ENCODE measurements at regions of chr15 and their contacts with region 1.

Region 1: GRCh38 chr15:50003786-50004334 is 115.2 kb downstream of the ATP8B4 start:
- DNase-seq: peak; percentile 74 to 79
- ATAC-seq: peak; percentile 97 to 99 (median 99)
- H3K4me3 ChIP-seq: no peak overlapping the region
- H3K4me3 Mint-ChIP-seq: peak overlapping the region; percentile 75
- H3K27ac ChIP-seq: peak overlapping the region; percentile 66
- H3K27ac Mint-ChIP-seq: peak overlapping the region; percentile 88 to 95
- H3K4me1 ChIP-seq: peaks cover 13% of the 10 kb centered on the region
- H3K4me1 Mint-ChIP-seq: peaks cover 25 to 30% of the 10 kb centered on the region in 2 donors
- H3K27me3 ChIP-seq: no peaks in the 10 kb centered on the region
- H3K27me3 Mint-ChIP-seq: no peaks in the 10 kb centered on the region
- CTCF ChIP-seq: peak; percentile 73

Region 2: GRCh38 chr15:50046867-50047266 is 43.0 kb after region 1 on chr15:
- intact Hi-C with region 1: no loop called
- DNase-seq: no peak
- ATAC-seq: peak; percentile 76 to 82 (median 80)
- H3K4me3 ChIP-seq: no peak overlapping the region
- H3K4me3 Mint-ChIP-seq: no peak overlapping the region
- H3K27ac ChIP-seq: peak overlapping the region; percentile 83
- H3K27ac Mint-ChIP-seq: peak overlapping the region; percentile 89 to 95
- H3K4me1 ChIP-seq: peaks cover 2% of the 10 kb centered on the region
- H3K4me1 Mint-ChIP-seq: peaks cover 41 to 53% of the 10 kb centered on the region in 2 donors
- H3K27me3 ChIP-seq: no peaks in the 10 kb centered on the region
- H3K27me3 Mint-ChIP-seq: no peaks in the 10 kb centered on the region
- CTCF ChIP-seq: no peak

Region 3: GRCh38 chr15:50059883-50060282 is 56.0 kb after region 1 on chr15:
- intact Hi-C with region 1: loop called (anchors 5 kb)
- DNase-seq: no peak
- ATAC-seq: peak in 2 of 3 donors; percentile 29 to 51
- H3K4me3 ChIP-seq: no peak overlapping the region
- H3K4me3 Mint-ChIP-seq: peak overlapping the region; percentile 41
- H3K27ac ChIP-seq: no peak overlapping the region
- H3K27ac Mint-ChIP-seq: peak overlapping the region; percentile 55 to 58
- H3K4me1 ChIP-seq: peaks cover 19% of the 10 kb centered on the region
- H3K4me1 Mint-ChIP-seq: peaks cover 89 to 90% of the 10 kb centered on the region in 2 donors
- H3K27me3 ChIP-seq: no peaks in the 10 kb centered on the region
- H3K27me3 Mint-ChIP-seq: no peaks in the 10 kb centered on the region
- CTCF ChIP-seq: no peak

Region 4: GRCh38 chr15:50095938-50096821 is 92.3 kb after region 1 on chr15:
- intact Hi-C with region 1: no loop called
- DNase-seq: no peak
- ATAC-seq: peak in 2 of 3 donors; percentile 38 to 50
- H3K4me3 ChIP-seq: no peak overlapping the region
- H3K4me3 Mint-ChIP-seq: no peak overlapping the region
- H3K27ac ChIP-seq: no peak overlapping the region
- H3K27ac Mint-ChIP-seq: peak overlapping the region; percentile 49 to 64
- H3K4me1 ChIP-seq: peaks cover 8% of the 10 kb centered on the region
- H3K4me1 Mint-ChIP-seq: peaks cover 39 to 44% of the 10 kb centered on the region in 2 donors
- H3K27me3 ChIP-seq: no peaks in the 10 kb centered on the region
- H3K27me3 Mint-ChIP-seq: no peaks in the 10 kb centered on the region
- CTCF ChIP-seq: no peak

Region 5: DNA sequence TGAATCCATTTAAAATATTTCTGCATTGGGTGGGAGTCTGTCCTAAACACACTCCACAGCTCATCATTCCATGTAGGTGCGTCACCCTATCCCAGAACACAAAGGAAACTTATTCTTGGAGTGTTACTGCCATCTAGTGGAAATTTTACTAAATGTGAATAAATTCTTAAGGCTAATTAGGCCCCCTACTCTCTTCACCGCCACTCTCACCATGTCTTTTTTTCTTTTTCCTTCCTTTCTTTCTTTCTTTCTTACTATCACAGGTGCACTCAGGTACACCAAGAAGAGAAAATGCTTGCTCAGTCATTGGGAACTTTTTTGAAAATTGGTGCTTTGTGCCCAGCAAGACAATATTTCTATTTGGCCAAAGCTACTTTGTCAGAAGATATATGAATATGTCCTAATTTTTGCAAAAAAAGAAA is 141.6 kb after region 1 on chr15:
- intact Hi-C with region 1: loop called (anchors 1 kb)
- DNase-seq: peak in 1 of 2 donors; percentile 71
- ATAC-seq: peak; percentile 56 to 67 (median 62)
- H3K4me3 ChIP-seq: no peak overlapping the region
- H3K4me3 Mint-ChIP-seq: no peak overlapping the region
- H3K27ac ChIP-seq: no peak overlapping the region
- H3K27ac Mint-ChIP-seq: no peak overlapping the region
- H3K4me1 ChIP-seq: no peaks in the 10 kb centered on the region
- H3K4me1 Mint-ChIP-seq: peaks cover 0 to 5% of the 10 kb centered on the region in 2 donors
- H3K27me3 ChIP-seq: no peaks in the 10 kb centered on the region
- H3K27me3 Mint-ChIP-seq: no peaks in the 10 kb centered on the region
- CTCF ChIP-seq: peak; percentile 81

Measured in natural killer cell (primary cell).